Dorsolateral prefrontal cortex (tissue), 120 donors: ENCODE measurements at regions of chr17 and their contacts with region 1.

Region 1: GRCh38 chr17:42566883-42567573 is at the start of gene MLX:
- DNase-seq: peak; percentile 82 to 95 (median 90)
- H3K4me3 ChIP-seq: peak within 1 kb of the TSS; percentile 73 to 100 (median 96)
- H3K27ac ChIP-seq: peak within 1 kb of the TSS; percentile 85 to 98 (median 94)
- H3K27me3 ChIP-seq: no peaks in the 10 kb centered on the region
- CTCF ChIP-seq: peak in 16 of 56 donors; percentile 7 to 38 (median 20)
- total RNA-seq, gene MLX: 16.9 to 36.3 (median 26.3) TPM

Region 2: GRCh38 chr17:42502091-42502490 is 64.9 kb before region 1 on chr17:
- intact Hi-C with region 1: no loop called
- DNase-seq: no peak
- H3K4me3 ChIP-seq: no peak overlapping the region
- H3K27ac ChIP-seq: peak overlapping the region in 5 of 59 donors; percentile 11 to 53 (median 32)
- H3K27me3 ChIP-seq: no peaks in the 10 kb centered on the region
- CTCF ChIP-seq: no peak

Region 3: DNA sequence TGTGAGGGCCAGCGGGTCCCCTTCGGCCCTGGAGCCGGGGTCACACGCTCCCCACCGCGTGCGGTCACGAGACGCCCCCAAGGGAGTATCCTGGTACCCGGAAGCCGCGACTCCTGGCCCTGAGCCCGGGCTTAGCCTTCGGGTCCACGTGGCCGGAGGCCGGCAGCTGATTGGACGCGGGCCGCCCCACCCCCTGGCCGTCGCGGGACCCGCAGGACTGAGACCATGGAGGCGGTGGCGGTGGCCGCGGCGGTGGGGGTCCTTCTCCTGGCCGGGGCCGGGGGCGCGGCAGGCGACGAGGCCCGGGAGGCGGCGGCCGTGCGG is 31.0 kb before region 1 on chr17 and contains the start of gene NAGLU:
- intact Hi-C with region 1: loop called in 1 of 2 experiments (anchors 2 kb)
- DNase-seq: peak; percentile 92 to 98 (median 95)
- H3K4me3 ChIP-seq: peak within 1 kb of the TSS; percentile 48 to 82 (median 74)
- H3K27ac ChIP-seq: peak within 1 kb of the TSS; percentile 83 to 100 (median 97)
- H3K27me3 ChIP-seq: no peaks in the 10 kb centered on the region
- CTCF ChIP-seq: peak in 15 of 56 donors; percentile 0 to 38 (median 18)
- total RNA-seq, gene NAGLU: 7.5 to 45.5 (median 18.3) TPM

Region 4: GRCh38 chr17:42609182-42609813 is 42.3 kb after region 1 on chr17 and contains the starts of genes RETREG3 and TUBG1:
- intact Hi-C with region 1: loop called in 1 of 2 experiments (anchors 5 kb)
- DNase-seq: peak; percentile 97 to 99 (median 98)
- H3K4me3 ChIP-seq: peak within 1 kb of the TSS; percentile 68 to 100 (median 92)
- H3K27ac ChIP-seq: peak within 1 kb of the TSS; percentile 78 to 99 (median 94)
- H3K27me3 ChIP-seq: no peaks in the 10 kb centered on the region
- CTCF ChIP-seq: peak in 44 of 56 donors; percentile 1 to 57 (median 25)
- total RNA-seq, gene RETREG3: 38.8 to 64.5 (median 50.8) TPM
- total RNA-seq, gene TUBG1: 29.0 to 81.9 (median 52.2) TPM

Region 5: GRCh38 chr17:42623732-42624596 is 56.9 kb after region 1 on chr17:
- intact Hi-C with region 1: no loop called
- DNase-seq: no peak
- H3K4me3 ChIP-seq: no peak overlapping the region
- H3K27ac ChIP-seq: no peak overlapping the region
- H3K27me3 ChIP-seq: no peaks in the 10 kb centered on the region
- CTCF ChIP-seq: no peak

Region 6: DNA sequence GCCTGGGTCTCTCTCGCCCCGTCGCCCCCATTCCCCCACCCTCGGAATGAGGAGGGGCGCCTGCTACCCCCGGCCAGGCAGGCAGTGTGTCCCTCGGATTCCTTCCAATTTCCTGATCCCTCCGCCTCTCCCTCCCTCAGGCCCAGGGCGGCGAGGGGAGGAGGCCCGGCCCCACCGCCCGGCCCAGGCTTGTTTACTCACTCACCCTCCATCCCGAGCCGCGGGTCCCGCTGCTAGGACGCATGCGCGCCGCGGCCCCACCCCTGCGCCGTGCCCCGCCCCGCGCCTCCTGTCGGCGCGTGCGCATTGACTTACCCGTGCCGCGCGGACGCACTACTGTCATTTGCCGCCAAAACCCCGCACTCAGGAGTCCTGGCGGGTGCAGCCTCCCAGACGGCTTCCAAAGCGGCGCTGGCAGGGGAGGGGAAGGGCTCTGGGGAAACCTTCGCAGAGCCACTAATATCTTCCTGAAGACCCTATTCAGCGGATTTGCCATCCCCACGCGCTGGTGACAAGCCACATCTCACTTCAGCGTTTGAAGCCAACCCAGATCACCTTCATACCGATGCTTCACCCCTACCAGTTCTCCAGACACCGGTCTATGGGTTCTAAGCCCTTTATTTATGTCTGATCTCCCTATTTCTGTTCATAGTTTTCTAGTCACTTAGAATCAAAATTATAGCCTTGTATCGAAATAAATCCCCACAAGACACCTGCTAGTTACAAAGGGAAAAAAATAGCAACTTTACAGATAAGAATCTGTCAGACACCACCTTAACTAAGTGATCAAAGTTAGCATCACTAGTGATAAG is 178.0 kb after region 1 on chr17 and contains the start of gene EZH1:
- intact Hi-C with region 1: loop called in 1 of 2 experiments (anchors 5 kb)
- DNase-seq: peak; percentile 78 to 94 (median 86)
- H3K4me3 ChIP-seq: peak within 1 kb of the TSS; percentile 61 to 98 (median 86)
- H3K27ac ChIP-seq: peak within 1 kb of the TSS; percentile 66 to 98 (median 95)
- H3K27me3 ChIP-seq: no peaks in the 10 kb centered on the region
- CTCF ChIP-seq: peak in 35 of 56 donors; percentile 8 to 55 (median 27)
- total RNA-seq, gene EZH1: 80.4 to 150 (median 110) TPM